ENCODE measurements at regions of chr11 and their contacts with region 1.

Region 1: GRCh38 chr11:87878373-87878779 is 296.9 kb downstream of the RAB38 start:
- DNase-seq: peak; percentile 75
- ATAC-seq: peak; percentile 77
- H3K4me3 ChIP-seq: no peak overlapping the region
- H3K27ac ChIP-seq: peak overlapping the region; percentile 1; the same call in 1 of the 2 replicates
- H3K4me1 ChIP-seq: peaks cover 13% of the 10 kb centered on the region
- H3K27me3 ChIP-seq: no peaks in the 10 kb centered on the region
- CTCF ChIP-seq: peak; percentile 90

Region 2: GRCh38 chr11:87331273-87331672 is 547.1 kb before region 1 on chr11:
- CTCF ChIA-PET with region 1: no interaction called
- POLR2A ChIA-PET with region 1: no interaction called
- intact Hi-C with region 1: no loop called
- DNase-seq: no peak
- ATAC-seq: no peak
- H3K4me3 ChIP-seq: no peak overlapping the region
- H3K27ac ChIP-seq: no peak overlapping the region
- H3K4me1 ChIP-seq: no peaks in the 10 kb centered on the region
- H3K27me3 ChIP-seq: no peaks in the 10 kb centered on the region
- CTCF ChIP-seq: no peak

Region 3: GRCh38 chr11:87352759-87353707 is 525.3 kb before region 1 on chr11:
- CTCF ChIA-PET with region 1: no interaction called
- POLR2A ChIA-PET with region 1: no interaction called
- intact Hi-C with region 1: loop called (anchors 10 kb)
- DNase-seq: peak; percentile 96
- ATAC-seq: peak; percentile 87
- H3K4me3 ChIP-seq: peak overlapping the region; percentile 52
- H3K27ac ChIP-seq: peak overlapping the region; percentile 16; the same call in 1 of the 2 replicates
- H3K4me1 ChIP-seq: peaks cover 29% of the 10 kb centered on the region
- H3K27me3 ChIP-seq: no peaks in the 10 kb centered on the region
- CTCF ChIP-seq: peak; percentile 99

Region 4: GRCh38 chr11:87743007-87743406 is 135.4 kb before region 1 on chr11:
- CTCF ChIA-PET with region 1: interaction called, 4 read pairs
- POLR2A ChIA-PET with region 1: no interaction called
- intact Hi-C with region 1: loop called (anchors 1 kb)
- DNase-seq: peak; percentile 51
- ATAC-seq: peak; percentile 44; the same call in 1 of the 2 replicates
- H3K4me3 ChIP-seq: no peak overlapping the region
- H3K27ac ChIP-seq: no peak overlapping the region
- H3K4me1 ChIP-seq: no peaks in the 10 kb centered on the region
- H3K27me3 ChIP-seq: no peaks in the 10 kb centered on the region
- CTCF ChIP-seq: peak; percentile 65

Region 5: DNA sequence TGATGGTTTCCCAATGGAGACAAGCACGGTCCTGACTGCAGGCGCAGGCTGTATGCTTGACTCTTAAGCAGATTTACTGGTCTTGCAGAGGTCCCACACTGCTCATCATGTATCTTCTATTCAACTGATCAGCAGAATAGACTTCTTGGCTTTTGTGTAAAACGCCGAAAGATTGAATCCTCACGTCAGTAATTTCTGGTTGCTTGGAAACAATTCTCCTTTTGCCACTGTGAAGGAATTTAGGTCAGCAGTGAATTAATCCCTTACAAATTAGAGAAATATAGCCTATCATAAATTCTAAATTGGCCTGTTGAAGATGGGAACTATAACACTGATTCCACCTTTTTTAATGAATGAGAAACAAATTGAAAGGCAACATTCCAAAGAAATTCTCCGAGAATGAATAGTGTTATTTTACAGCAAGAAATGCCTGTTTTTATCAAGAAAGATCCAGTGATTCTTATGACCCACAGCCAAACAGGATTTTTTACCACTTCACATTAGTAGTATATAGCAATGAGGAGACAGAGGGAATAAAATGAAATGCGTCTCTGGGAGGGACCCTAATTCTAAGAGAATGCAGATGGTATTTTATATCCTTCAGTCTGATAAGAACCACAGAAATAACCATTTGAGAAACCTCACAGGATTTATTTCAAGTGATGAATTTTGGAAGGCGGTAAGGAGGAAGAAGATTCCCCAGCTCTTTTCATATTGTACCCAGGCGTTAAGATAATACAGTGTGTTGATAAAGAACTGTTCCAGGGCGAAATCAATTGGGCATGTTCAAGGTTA is 65.6 kb before region 1 on chr11:
- CTCF ChIA-PET with region 1: no interaction called
- POLR2A ChIA-PET with region 1: no interaction called
- intact Hi-C with region 1: loop called (anchors 5 kb)
- DNase-seq: no peak
- ATAC-seq: no peak
- H3K4me3 ChIP-seq: no peak overlapping the region
- H3K27ac ChIP-seq: no peak overlapping the region
- H3K4me1 ChIP-seq: 0 out of 2 replicates have a peak, but pooled peaks cover 3% of the 10 kb centered on the region
- H3K27me3 ChIP-seq: no peaks in the 10 kb centered on the region
- CTCF ChIP-seq: no peak

Region 6: GRCh38 chr11:88016392-88017170 is 138.2 kb after region 1 on chr11:
- CTCF ChIA-PET with region 1: interaction called, 18 read pairs
- POLR2A ChIA-PET with region 1: no interaction called
- intact Hi-C with region 1: loop called (anchors 1 kb)
- DNase-seq: peak; percentile 96
- ATAC-seq: peak; percentile 84
- H3K4me3 ChIP-seq: no peak overlapping the region
- H3K27ac ChIP-seq: no peak overlapping the region
- H3K4me1 ChIP-seq: peaks cover 21% of the 10 kb centered on the region
- H3K27me3 ChIP-seq: no peaks in the 10 kb centered on the region
- CTCF ChIP-seq: peak; percentile 97

Region 7: GRCh38 chr11:88281317-88281712 is 402.9 kb after region 1 on chr11:
- CTCF ChIA-PET with region 1: no interaction called
- POLR2A ChIA-PET with region 1: no interaction called
- intact Hi-C with region 1: loop called (anchors 2 kb)
- DNase-seq: peak; percentile 44
- ATAC-seq: peak; percentile 31; the same call in 1 of the 2 replicates
- H3K4me3 ChIP-seq: no peak overlapping the region
- H3K27ac ChIP-seq: no peak overlapping the region
- H3K4me1 ChIP-seq: 0 out of 2 replicates have a peak, but pooled peaks cover 4% of the 10 kb centered on the region
- H3K27me3 ChIP-seq: no peaks in the 10 kb centered on the region
- CTCF ChIP-seq: peak; percentile 63

Region 8: GRCh38 chr11:88886796-88887195 is 1008.4 kb after region 1 on chr11:
- CTCF ChIA-PET with region 1: interaction called, 6 read pairs
- POLR2A ChIA-PET with region 1: no interaction called
- intact Hi-C with region 1: loop called (anchors 1 kb)
- DNase-seq: peak; percentile 94
- ATAC-seq: peak; percentile 99
- H3K4me3 ChIP-seq: no peak overlapping the region
- H3K27ac ChIP-seq: no peak overlapping the region
- H3K4me1 ChIP-seq: no peaks in the 10 kb centered on the region
- H3K27me3 ChIP-seq: no peaks in the 10 kb centered on the region
- CTCF ChIP-seq: peak; percentile 87